AG04449 (cell line): ENCODE measurements at regions of chr16 and their contacts with region 1.

Region 1: GRCh38 chr16:50354629-50355456 is 13.9 kb downstream of the BRD7 start:
- DNase-seq: no peak
- H3K4me3 ChIP-seq: no peak overlapping the region
- CTCF ChIP-seq: peak; percentile 23

Region 2: DNA sequence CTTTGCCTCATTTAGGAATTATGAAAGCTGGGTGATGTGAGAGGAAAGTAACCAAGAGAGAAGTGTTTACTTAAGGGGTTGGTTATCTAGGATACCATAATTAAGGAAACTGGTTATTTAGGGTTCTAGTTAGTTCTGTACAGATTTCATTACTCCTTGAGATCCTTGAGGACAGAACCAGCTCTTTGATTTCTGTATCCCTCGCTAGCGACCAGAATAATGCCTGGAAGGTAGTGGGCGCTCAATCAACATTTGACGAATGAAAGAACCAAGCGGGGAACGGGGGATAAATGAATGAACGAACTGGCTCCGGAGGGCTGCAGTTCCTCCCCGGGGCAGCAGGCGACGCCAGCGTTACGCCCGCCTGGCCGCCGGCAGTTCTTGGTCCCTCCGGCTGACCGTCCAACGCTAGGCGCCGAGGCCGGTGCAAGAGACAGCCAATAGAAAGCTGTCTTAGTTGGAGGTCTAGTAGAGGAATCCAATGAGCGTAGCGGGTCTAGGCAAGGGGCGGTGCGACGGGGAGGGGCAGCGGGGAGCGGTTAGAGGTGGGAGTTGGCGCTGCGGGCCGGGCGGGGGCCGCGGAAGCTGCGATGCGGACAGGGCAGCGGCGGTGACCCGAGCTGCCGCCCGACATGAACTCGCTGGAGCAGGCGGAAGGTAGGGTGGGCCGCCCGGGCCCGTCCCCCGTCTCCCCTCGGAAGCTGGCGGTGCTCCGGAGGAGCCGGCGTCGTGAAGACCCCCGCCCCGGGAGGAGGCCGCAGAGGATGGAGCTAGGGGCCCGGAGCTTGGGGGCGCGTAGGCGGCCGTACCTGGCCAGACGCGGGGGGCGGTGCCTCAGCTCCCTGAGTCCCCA is 329.9 kb before region 1 on chr16 and contains the start of gene CNEP1R1:
- CTCF ChIA-PET with region 1: interaction called, 67 read pairs
- POLR2A ChIA-PET with region 1: no interaction called
- DNase-seq: peak; percentile 77
- H3K4me3 ChIP-seq: peak within 1 kb of the TSS; percentile 86
- CTCF ChIP-seq: peak; percentile 100

Region 3: DNA sequence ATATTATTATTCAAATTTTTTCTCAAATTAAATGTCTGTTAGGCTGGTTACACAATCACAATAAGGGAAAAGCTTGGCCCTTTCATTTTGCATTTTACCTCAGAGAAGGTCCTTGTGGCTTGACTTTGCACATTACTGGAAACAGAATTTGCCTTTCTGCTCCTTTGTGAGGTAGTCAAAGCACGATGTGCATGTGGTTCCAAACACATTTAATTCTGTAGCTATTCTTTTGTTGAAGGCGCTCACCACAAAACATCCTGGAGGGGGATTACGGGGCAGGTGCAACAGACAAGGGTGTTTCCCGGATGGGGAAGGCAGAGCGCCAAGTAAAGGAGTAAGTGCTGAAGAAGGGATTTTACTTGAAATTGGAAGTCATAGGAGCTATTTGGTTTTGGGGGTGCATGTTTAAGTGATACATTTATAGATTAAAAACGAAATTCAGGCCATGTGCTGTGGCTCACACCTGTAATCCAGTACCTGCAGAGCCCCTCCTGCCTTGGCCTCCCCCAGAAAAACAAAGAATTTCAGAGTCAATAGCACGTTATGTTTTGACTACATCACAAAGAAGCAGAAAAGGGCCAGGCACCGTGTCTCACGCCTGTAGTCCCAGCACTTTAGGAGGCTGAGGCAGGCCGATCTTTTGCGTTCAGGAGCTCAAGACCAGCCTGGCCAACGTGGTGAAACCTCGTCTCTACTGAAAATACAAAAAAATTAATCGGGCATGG is 233.0 kb before region 1 on chr16:
- CTCF ChIA-PET with region 1: no interaction called
- POLR2A ChIA-PET with region 1: no interaction called
- DNase-seq: no peak
- H3K4me3 ChIP-seq: no peak overlapping the region
- CTCF ChIP-seq: no peak

Region 4: DNA sequence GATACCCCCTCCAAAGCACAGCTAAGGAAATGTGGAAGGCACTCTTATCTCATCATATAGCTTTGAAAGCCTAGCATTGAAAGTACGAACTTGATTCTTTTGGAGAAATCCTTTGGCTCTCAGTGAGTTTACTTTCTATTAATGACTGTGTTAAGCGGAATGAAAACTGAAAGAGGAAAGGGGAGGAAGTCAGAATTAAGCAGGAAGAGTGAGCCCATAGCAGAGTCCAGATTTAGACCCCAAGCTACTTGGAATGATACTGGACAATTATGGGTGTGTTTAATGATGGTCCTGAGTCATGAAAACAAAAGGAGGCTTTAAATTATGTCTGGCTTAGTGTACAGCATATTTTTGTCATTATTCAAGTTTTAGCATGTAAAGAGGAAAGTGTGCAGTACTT is 159.6 kb before region 1 on chr16:
- CTCF ChIA-PET with region 1: no interaction called
- POLR2A ChIA-PET with region 1: no interaction called
- DNase-seq: no peak
- H3K4me3 ChIP-seq: peak overlapping the region; percentile 23; the same call in 1 of the 2 replicates
- CTCF ChIP-seq: no peak

Region 5: DNA sequence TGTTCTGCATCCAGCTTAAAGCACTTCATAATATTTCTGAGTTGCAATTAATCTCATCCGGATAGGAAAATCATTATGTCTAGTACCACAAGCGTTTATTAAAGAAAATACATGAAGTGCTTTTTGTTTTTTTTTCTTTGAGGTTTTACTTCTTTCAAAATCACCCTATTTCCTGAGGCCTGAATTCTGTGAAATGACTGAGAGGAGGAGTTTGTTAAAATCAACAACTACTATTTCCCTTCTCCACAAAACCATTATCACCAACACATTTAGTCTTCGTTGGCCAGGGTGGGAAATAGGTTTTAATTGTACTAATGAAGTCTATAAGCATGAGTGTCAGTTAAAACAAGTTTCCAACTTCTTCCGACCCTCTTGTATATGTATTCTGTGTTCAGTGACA is 139.2 kb before region 1 on chr16:
- CTCF ChIA-PET with region 1: interaction called, 111 read pairs
- POLR2A ChIA-PET with region 1: no interaction called
- DNase-seq: no peak
- H3K4me3 ChIP-seq: no peak overlapping the region
- CTCF ChIP-seq: no peak

Region 6: GRCh38 chr16:50326949-50327402 is 27.9 kb before region 1 on chr16:
- CTCF ChIA-PET with region 1: interaction called, 16 read pairs
- POLR2A ChIA-PET with region 1: no interaction called
- DNase-seq: no peak
- H3K4me3 ChIP-seq: no peak overlapping the region
- CTCF ChIP-seq: peak; percentile 48

Region 7: GRCh38 chr16:50368410-50369132 is 13.7 kb after region 1 on chr16 and contains the start of gene BRD7:
- CTCF ChIA-PET with region 1: interaction called, 30 read pairs
- POLR2A ChIA-PET with region 1: no interaction called
- DNase-seq: no peak
- H3K4me3 ChIP-seq: peak within 1 kb of the TSS; percentile 62
- CTCF ChIP-seq: peak; percentile 54